ENCODE measurements at regions of chr1 and their contacts with region 1.

Region 1: DNA sequence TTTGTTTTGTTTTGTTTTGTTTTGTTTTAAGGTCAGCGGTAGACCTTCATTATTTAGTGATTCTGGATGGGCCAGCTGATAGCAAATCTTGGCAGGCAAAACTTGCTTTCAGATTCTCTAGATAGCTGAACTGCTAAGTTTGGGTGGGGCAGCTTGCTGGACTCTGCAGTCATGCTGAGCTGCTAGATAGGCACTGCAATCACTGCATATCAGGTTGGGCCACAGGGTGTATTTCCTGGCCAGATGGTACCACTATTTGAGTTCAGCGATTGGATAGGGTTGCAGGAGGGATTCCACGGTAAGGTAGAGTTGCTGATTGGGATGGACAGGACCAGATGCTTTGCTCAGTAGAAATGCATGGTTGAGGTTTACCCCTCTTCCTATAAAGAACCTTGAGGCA is 579.3 kb upstream of the ADGRL4 start:
- DNase-seq: no peak
- H3K4me3 Mint-ChIP-seq: no peak overlapping the region
- H3K27ac Mint-ChIP-seq: no peak overlapping the region
- H3K4me1 Mint-ChIP-seq: no peaks in the 10 kb centered on the region
- H3K27me3 Mint-ChIP-seq: no peaks in the 10 kb centered on the region

Region 2: GRCh38 chr1:79568412-79568811 is 17.4 kb before region 1 on chr1:
- CTCF ChIA-PET with region 1: interaction called, 10 read pairs
- POLR2A ChIA-PET with region 1: no interaction called
- intact Hi-C with region 1: no loop called
- DNase-seq: no peak
- H3K4me3 Mint-ChIP-seq: no peak overlapping the region
- H3K27ac Mint-ChIP-seq: no peak overlapping the region
- H3K4me1 Mint-ChIP-seq: no peaks in the 10 kb centered on the region
- H3K27me3 Mint-ChIP-seq: no peaks in the 10 kb centered on the region

Region 3: GRCh38 chr1:79603843-79604242 is 18.1 kb after region 1 on chr1:
- CTCF ChIA-PET with region 1: no interaction called
- POLR2A ChIA-PET with region 1: no interaction called
- intact Hi-C with region 1: no loop called
- DNase-seq: no peak
- H3K4me3 Mint-ChIP-seq: no peak overlapping the region
- H3K27ac Mint-ChIP-seq: no peak overlapping the region
- H3K4me1 Mint-ChIP-seq: no peaks in the 10 kb centered on the region
- H3K27me3 Mint-ChIP-seq: no peaks in the 10 kb centered on the region